ENCODE measurements at regions of chr20 and their contacts with region 1.

Region 1: GRCh38 chr20:62310757-62311121 is 7.9 kb downstream of the ADRM1 start:
- DNase-seq: no peak
- ATAC-seq: no peak
- H3K4me3 ChIP-seq: no peak overlapping the region
- H3K27ac ChIP-seq: no peak overlapping the region
- H3K4me1 ChIP-seq: peaks cover 0 to 15% (median 3%) of the 10 kb centered on the region in 12 donors
- H3K27me3 ChIP-seq: no peaks in the 10 kb centered on the region
- CTCF ChIP-seq: no peak
- POLR2A ChIP-seq: no peak

Region 2: DNA sequence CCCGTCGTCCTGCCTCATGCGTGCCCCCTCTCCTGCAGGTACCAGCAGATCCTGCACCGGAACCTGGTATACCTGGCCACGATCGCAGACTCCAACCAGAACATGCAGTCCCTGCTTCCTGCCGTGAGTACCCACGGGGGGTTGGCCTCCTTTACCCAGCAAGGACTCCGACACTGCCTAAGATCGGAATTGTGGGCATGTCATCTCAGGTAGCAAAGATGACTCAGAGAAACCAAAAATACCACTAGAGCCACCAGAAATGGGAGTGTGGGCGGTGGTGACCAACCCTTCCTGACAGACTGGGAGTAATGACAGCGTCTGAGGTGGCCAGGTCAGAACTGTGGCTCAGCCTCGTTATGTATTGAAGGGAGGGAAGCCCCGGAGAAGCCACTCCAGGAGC is 150.9 kb before region 1 on chr20:
- intact Hi-C with region 1: no loop called
- DNase-seq: peak in 1 of 5 donors; percentile 44
- ATAC-seq: no peak
- H3K4me3 ChIP-seq: no peak overlapping the region
- H3K27ac ChIP-seq: no peak overlapping the region
- H3K4me1 ChIP-seq: peaks cover 0 to 16% (median 9%) of the 10 kb centered on the region in 12 donors
- H3K27me3 ChIP-seq: no peaks in the 10 kb centered on the region
- CTCF ChIP-seq: no peak
- POLR2A ChIP-seq: no peak

Region 3: DNA sequence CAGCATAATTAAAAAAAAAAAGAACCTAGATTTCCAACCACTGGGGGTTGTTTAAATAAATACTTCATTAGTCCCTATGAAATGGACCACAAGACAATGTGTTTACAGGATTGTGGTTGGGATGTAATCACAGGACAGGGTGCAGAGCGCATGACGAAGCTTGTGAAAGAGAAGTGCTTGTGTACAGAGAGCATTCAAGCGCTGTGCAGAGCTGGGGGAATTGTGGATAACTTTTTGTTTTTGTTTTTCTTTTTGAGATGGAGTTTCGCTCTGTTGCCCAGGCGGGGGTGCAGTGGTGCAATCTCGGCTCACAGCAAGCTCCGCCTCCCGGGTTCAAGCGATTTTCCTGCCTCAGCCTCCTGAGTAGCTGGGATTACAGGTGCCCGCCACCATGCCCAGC is 34.0 kb after region 1 on chr20:
- intact Hi-C with region 1: loop called in 1 of 10 experiments (anchors 5 kb)
- DNase-seq: peak in 1 of 5 donors; percentile 17
- ATAC-seq: no peak
- H3K4me3 ChIP-seq: no peak overlapping the region
- H3K27ac ChIP-seq: peak overlapping the region in 1 of 12 donors; percentile 24
- H3K4me1 ChIP-seq: no peaks in the 10 kb centered on the region
- H3K27me3 ChIP-seq: no peaks in the 10 kb centered on the region
- CTCF ChIP-seq: no peak
- POLR2A ChIP-seq: no peak

Region 4: GRCh38 chr20:62357187-62357667 is 46.5 kb after region 1 on chr20:
- intact Hi-C with region 1: loop called in 3 of 10 experiments (anchors 5 to 10 kb)
- DNase-seq: peak; percentile 85 to 92 (median 87)
- ATAC-seq: peak; percentile 17 to 56 (median 44)
- H3K4me3 ChIP-seq: peak overlapping the region in 11 of 12 donors; percentile 2 to 48 (median 34)
- H3K27ac ChIP-seq: peak overlapping the region; percentile 69 to 97 (median 93)
- H3K4me1 ChIP-seq: peaks cover 36 to 96% (median 84%) of the 10 kb centered on the region in 12 donors
- H3K27me3 ChIP-seq: peaks cover 0 to 4% (median 0%) of the 10 kb centered on the region in 9 donors
- CTCF ChIP-seq: no peak
- POLR2A ChIP-seq: peak in 1 of 2 donors; percentile 12